ENCODE measurements at regions of chr1 and their contacts with region 1.

Region 1: GRCh38 chr1:178542560-178543356 is 29.8 kb downstream of the TEX35 start:
- DNase-seq: peak; percentile 53 to 73
- ATAC-seq: peak; percentile 76 to 89
- H3K4me3 ChIP-seq: peak overlapping the region; percentile 60 to 70 (median 64)
- H3K27ac ChIP-seq: peak overlapping the region; percentile 34 to 60 (median 54)
- H3K4me1 ChIP-seq: peaks cover 18 to 31% of the 10 kb centered on the region in 2 donors
- H3K27me3 ChIP-seq: no peaks in the 10 kb centered on the region
- CTCF ChIP-seq: peak; percentile 87 to 99 (median 96)
- POLR2A ChIP-seq: no peak

Region 2: GRCh38 chr1:178498896-178499675 is 43.7 kb before region 1 on chr1:
- in situ Hi-C with region 1: no loop called
- intact Hi-C with region 1: no loop called
- DNase-seq: no peak
- ATAC-seq: no peak
- H3K4me3 ChIP-seq: no peak overlapping the region
- H3K27ac ChIP-seq: no peak overlapping the region
- H3K4me1 ChIP-seq: no peaks in the 10 kb centered on the region
- H3K27me3 ChIP-seq: no peaks in the 10 kb centered on the region
- CTCF ChIP-seq: no peak
- POLR2A ChIP-seq: no peak

Region 3: DNA sequence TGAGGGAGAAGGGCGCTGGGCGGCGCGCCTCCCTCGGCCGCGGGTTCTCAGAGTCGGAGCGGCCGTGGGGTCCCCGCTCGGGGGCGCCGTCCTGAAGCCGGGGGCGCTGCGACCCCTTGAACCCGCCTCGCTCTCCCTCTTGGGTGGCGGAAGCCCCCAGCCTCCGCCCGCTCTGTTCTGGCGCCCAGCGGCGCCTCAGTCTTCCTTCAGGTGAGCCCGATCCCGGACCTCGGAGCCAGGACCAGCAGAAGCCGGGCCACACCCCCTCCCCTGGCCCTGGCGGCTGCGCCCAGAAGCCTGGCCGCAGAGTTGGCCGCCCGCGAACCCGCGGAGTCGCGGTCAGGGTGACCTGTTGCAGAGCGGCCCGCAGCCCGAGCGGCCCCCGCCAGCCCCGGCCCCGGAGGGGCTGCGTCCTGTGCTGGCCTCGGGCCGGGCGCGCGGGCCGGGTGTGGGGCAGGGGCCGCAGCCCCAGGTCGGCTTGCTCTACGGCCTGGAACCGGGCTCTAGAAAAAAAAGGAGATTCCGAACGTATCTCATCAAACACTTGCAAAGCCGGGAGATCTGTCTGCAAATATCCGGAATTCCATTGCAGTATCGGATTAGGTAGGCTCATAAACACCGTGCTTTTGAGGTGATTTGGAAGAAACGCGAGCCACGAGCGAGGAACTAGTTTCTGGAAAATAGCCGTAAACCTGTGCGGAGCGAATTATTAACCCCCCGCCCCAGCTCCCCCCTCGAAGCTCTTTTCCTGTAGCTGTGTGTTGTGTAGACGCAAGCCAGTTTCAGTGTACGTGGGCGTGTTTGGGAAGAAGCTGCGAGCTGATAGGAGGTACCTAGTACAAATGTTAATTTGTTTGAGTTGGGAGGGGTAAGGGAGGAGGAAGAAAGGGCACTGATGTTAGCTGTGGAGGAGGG is 183.1 kb after region 1 on chr1:
- in situ Hi-C with region 1: no loop called
- intact Hi-C with region 1: loop called (anchors 10 kb)
- DNase-seq: peak; percentile 41 to 59
- ATAC-seq: peak; percentile 79 to 84
- H3K4me3 ChIP-seq: peak overlapping the region; percentile 68 to 95 (median 80)
- H3K27ac ChIP-seq: peak overlapping the region; percentile 62 to 73 (median 63)
- H3K4me1 ChIP-seq: peaks cover 0 to 7% of the 10 kb centered on the region in 2 donors
- H3K27me3 ChIP-seq: no peaks in the 10 kb centered on the region
- CTCF ChIP-seq: no peak
- POLR2A ChIP-seq: peak in 1 of 2 donors; percentile 26

Region 4: GRCh38 chr1:178749581-178750166 is 206.9 kb after region 1 on chr1:
- in situ Hi-C with region 1: loop called in 2 of 4 experiments (anchors 5 to 10 kb)
- intact Hi-C with region 1: loop called (anchors 1 kb)
- DNase-seq: no peak
- ATAC-seq: no peak
- H3K4me3 ChIP-seq: no peak overlapping the region
- H3K27ac ChIP-seq: no peak overlapping the region
- H3K4me1 ChIP-seq: no peaks in the 10 kb centered on the region
- H3K27me3 ChIP-seq: no peaks in the 10 kb centered on the region
- CTCF ChIP-seq: no peak
- POLR2A ChIP-seq: no peak